HEK293 (cell line): ENCODE measurements at regions of chr9 and their contacts with region 1.

Region 1: GRCh38 chr9:4662108-4662988 is at the start of gene PLPP6:
- H3K4me3 ChIP-seq: peak within 1 kb of the TSS; percentile 86
- H3K27ac ChIP-seq: peak within 1 kb of the TSS; percentile 86
- H3K4me1 ChIP-seq: peaks cover 10% of the 10 kb centered on the region
- CTCF ChIP-seq: peak; percentile 66

Region 2: DNA sequence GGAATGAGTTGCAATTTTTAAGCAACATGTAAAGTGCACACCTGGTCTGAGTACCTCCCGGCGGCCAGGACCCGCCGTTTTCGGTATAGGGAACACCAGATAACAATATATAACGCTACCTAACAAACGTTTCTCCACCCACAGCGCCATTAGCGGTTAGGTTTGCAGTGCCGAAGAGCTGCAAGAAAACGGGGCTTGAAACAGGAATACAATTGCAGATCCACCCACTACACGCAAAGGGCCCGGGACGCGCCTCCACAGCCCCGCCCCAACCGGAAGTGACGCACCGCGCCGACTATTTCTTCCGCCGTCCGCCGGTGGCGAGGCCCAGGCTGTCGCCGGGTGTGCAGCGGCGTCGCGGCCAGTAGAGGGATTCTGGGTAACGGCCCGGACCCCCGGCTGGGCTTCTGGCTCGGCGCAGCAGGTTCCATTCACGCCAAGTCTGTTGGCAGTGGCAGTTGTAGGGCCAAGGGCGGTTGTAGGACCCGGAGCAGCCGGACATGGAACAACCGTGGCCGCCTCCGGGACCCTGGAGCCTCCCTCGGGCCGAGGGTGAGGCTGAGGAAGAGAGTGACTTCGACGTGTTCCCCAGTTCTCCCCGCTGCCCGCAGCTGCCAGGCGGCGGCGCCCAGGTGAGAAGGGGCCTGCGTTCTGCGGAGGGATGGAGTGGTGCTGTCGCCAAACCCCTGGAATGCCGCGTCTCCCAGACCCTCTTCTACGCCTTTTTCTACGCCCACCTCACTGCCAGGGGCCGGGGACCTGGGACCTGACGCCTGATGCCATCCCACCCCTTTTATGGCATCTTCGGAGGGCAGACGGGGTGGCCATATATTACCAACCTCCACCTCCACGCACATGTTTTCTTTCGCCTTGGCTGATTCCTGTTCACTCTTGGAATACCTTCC is 17.2 kb after region 1 on chr9 and contains the start of gene CDC37L1:
- CTCF ChIA-PET with region 1: interaction called, 16 read pairs
- POLR2A ChIA-PET with region 1: interaction called, 20 read pairs
- H3K4me3 ChIP-seq: peak within 1 kb of the TSS; percentile 84
- H3K27ac ChIP-seq: peak within 1 kb of the TSS; percentile 92
- H3K4me1 ChIP-seq: no peaks in the 10 kb centered on the region
- CTCF ChIP-seq: peak; percentile 86

Region 3: DNA sequence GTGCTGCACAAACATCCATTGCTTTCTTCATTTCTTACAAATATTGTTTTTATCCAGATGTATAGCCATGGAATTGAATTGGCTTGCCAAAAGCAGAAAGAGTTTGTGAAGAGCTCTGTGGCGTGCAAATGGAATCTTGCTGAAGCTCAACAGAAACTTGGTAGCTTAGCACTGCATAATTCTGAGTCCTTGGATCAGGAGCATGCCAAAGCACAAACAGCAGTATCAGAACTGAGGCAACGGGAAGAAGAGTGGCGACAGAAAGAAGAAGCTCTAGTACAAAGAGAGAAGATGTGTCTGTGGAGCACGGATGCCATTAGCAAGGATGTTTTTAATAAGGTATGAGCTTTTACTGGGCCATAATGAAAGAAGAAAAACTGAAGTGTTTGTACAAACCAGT is 22.5 kb after region 1 on chr9:
- CTCF ChIA-PET with region 1: interaction called, 4 read pairs
- POLR2A ChIA-PET with region 1: interaction called, 12 read pairs
- H3K4me3 ChIP-seq: no peak overlapping the region
- H3K27ac ChIP-seq: no peak overlapping the region
- H3K4me1 ChIP-seq: no peaks in the 10 kb centered on the region; the same call in 1 of the 2 replicates
- CTCF ChIP-seq: no peak